Right cardiac atrium (tissue), 5 donors: ENCODE measurements at regions of chr6 and their contacts with region 1.

Region 1: DNA sequence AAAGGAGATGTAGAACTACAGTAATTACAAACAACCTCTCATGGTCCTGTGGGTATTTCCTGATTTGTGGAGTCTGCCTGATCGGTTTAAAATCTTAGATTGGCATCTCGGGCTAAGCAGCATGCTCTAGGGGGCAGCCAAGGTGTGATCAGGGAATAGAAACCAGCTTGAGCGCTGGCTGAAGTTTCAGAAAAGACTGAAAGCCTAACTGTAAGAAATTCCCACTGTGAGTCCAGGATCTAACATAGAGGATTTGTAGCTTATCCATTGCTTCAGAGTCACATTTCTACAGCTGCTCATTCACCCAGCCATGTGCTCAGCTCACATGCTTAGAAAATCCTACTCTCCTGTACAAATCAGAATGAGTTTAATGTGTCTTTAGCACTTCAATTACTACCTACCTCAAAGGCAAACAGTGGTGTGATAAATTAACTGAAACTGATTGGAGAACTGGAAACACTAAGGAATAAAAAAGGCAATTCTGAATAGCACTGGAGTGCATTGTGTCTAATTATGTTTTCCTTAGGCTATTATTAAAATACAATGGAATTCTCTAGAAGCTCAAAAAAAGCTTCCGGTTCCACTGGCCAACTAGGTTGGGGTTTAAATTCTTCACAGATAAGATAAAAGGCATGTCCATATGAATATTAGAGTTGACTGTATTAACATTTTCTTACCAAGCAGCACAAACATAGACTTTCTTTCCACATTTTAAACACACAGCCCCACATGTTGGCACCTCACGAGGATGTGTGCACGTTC is 73.8 kb upstream of the MPC1 start:
- DNase-seq: no peak
- ATAC-seq: peak in 1 of 2 donors; percentile 34
- H3K4me3 ChIP-seq: no peak overlapping the region
- H3K27ac ChIP-seq: peak overlapping the region; percentile 37
- H3K4me1 ChIP-seq: no peaks in the 10 kb centered on the region
- H3K27me3 ChIP-seq: no peaks in the 10 kb centered on the region

Region 2: GRCh38 chr6:166633732-166634535 is 177.4 kb after region 1 on chr6:
- intact Hi-C with region 1: loop called in 1 of 4 experiments (anchors 10 kb)
- DNase-seq: no peak
- ATAC-seq: peak; percentile 65 to 73
- H3K4me3 ChIP-seq: no peak overlapping the region
- H3K27ac ChIP-seq: peak overlapping the region; percentile 90
- H3K4me1 ChIP-seq: peaks cover 5% of the 10 kb centered on the region
- H3K27me3 ChIP-seq: no peaks in the 10 kb centered on the region

Region 3: DNA sequence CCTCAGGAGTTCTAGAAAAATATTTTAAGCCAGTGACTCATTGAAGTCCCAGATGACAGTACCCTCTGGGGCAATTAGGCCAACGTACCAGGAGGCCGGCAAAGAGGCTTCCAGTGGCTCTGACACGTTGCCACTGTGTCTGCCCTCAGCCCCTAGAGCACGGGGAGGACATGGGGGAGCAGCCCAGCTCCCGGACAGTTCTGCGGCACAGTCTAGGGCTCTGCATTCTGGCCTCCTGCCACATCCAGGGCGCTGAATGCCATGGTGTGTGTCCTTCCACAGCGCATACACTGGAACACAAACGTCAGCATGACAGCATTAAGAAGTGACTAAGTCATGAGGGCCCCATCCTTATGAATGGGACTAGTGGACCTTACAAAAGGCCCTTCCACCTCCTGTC is 343.6 kb after region 1 on chr6:
- intact Hi-C with region 1: no loop called
- DNase-seq: no peak
- ATAC-seq: no peak
- H3K4me3 ChIP-seq: no peak overlapping the region
- H3K27ac ChIP-seq: no peak overlapping the region
- H3K4me1 ChIP-seq: no peaks in the 10 kb centered on the region
- H3K27me3 ChIP-seq: no peaks in the 10 kb centered on the region